Activated T-helper 2 cell treated with anti-CD3 and anti-CD28 coated beads, Interferon-gamma antibody, Interleukin-2, Interleukin-4, amounts not matched to agents 10 μg/mL and 5 μg/mL and 100 μg/mL, durations not matched to agents 14 hours and 24 hours and 36 hours (primary cell): ENCODE measurements at regions of chr14 and their contacts with region 1.

Region 1: GRCh38 chr14:74841230-74842207 is 34.4 kb downstream of the PROX2 start:
- DNase-seq: no peak
- H3K4me3 Mint-ChIP-seq: peak overlapping the region; percentile 45
- H3K27ac Mint-ChIP-seq: peak overlapping the region; percentile 73
- H3K4me1 Mint-ChIP-seq: peaks cover 43% of the 10 kb centered on the region
- H3K27me3 Mint-ChIP-seq: no peaks in the 10 kb centered on the region

Region 2: DNA sequence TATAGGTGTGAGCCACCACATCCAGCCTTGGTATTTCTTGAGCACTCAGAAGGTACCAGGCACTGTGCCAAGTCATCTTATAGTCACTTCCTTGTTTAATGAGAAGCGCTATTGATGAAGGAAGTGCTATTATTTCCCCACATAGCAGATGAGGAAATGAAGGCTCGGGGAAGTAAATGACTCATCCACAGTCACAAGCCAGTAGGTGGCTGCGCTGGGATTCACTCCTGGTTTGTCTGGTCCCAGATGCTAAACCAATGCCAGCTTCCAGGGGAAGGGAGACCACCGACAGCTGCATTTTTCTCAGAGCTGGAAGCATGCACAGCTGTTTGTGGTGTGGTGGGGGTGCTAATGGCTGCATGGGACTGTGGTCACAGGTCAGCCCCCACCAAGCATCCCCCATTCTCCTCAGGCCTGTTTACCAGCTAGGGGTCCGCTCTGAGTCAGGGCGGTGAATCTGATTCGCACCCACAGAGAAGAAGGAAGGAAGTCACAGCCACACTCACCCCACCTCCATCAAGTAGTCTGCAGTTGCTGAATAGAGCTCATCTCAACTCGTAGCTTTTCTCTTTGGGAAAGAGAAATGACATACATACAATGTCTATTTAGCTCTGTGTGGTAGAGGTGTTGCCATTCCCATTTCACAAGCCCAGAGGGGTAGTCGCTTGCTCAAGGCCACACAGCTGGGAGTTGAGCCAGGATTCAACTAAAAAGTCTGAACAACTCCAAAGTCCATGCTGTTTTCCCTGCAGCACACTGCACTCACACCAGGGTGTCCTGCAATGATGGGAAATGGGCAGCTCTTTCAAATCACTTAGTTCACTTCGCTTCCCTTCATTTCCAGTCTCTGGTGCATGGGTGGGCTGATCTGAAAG is 223.2 kb before region 1 on chr14:
- intact Hi-C with region 1: loop called (anchors 5 kb)
- DNase-seq: peak; percentile 40
- H3K4me3 Mint-ChIP-seq: no peak overlapping the region
- H3K27ac Mint-ChIP-seq: peak overlapping the region; percentile 24
- H3K4me1 Mint-ChIP-seq: peaks cover 65% of the 10 kb centered on the region
- H3K27me3 Mint-ChIP-seq: peaks cover 25% of the 10 kb centered on the region

Region 3: DNA sequence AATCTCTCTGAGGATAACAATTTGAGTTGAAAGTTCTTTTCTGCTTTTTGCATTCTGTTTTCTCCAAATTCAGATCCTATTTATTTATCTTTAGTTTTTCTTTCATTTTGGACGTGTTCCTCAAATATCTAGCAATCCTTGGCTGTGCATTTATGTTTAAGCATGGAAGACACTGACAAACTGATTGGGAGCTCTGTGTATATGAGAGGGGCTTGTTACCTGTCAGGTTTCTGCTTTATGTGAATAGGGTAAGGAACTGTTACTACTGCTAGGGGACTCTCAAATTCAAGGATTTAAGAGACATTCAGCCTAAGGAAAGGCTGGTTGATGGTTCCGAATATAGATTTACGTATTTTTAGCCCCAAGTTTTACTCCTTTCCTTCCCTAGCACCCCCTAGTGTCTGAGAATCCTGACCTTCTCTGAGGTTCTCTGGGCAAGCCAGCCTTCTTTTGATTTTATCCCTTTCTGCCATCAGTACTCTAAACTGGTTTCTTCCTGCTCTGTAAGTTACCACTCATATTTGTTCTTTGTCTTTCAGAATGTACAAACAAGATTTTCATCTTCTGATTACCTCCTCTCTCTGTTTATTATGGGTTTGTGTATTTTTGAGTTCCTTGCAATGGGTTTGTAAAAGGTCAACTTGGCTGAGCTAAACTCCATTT is 47.9 kb before region 1 on chr14:
- intact Hi-C with region 1: loop called (anchors 2 kb)
- DNase-seq: no peak
- H3K4me3 Mint-ChIP-seq: peak overlapping the region; percentile 63
- H3K27ac Mint-ChIP-seq: peak overlapping the region; percentile 79
- H3K4me1 Mint-ChIP-seq: peaks cover 39% of the 10 kb centered on the region
- H3K27me3 Mint-ChIP-seq: no peaks in the 10 kb centered on the region

Region 4: DNA sequence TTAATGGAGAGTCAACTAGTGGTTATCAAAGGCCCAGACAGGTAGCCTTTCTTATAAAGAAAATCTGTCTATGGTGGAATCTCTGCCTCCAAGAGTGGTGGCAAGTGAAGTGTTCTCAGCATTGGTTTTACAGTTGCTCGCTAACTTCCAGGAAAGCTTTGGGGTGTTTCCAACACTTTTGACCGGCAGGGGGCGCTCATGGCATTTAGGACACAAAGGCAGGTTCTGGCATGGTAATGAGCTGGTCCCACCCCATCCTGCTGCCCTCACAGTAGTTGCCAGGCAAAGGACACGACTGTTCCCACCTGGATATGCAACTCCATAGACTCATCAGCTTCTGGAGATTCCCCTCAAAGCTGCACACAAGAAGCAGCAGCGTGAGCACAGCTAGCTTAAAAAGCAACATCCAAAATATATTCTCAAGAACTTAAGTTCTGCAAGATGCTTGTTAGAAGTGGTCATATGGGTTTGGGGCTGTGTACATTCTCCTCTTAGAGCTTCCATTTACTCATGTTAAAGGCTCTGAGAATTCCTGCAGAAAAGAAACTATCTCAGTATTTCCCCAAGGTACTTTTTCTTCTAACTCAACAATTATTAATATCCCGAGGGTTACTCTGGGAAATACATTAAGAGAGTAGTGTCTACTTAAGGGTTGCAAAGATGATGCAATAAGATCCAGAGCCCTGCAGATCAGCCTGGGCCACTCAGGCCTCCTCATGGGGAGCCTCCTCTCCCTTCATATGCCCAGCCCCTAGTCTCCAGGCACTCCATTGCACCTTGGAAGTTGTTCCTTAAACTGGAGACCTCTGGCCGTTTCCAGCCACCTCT is 19.6 kb after region 1 on chr14:
- intact Hi-C with region 1: no loop called
- DNase-seq: peak; percentile 78
- H3K4me3 Mint-ChIP-seq: no peak overlapping the region
- H3K27ac Mint-ChIP-seq: no peak overlapping the region
- H3K4me1 Mint-ChIP-seq: no peaks in the 10 kb centered on the region
- H3K27me3 Mint-ChIP-seq: no peaks in the 10 kb centered on the region

Region 5: GRCh38 chr14:74881431-74882361 is 40.2 kb after region 1 on chr14 and contains the start of gene DLST:
- intact Hi-C with region 1: loop called (anchors 5 kb)
- DNase-seq: peak; percentile 84
- H3K4me3 Mint-ChIP-seq: peak within 1 kb of the TSS; percentile 100
- H3K27ac Mint-ChIP-seq: peak within 1 kb of the TSS; percentile 97
- H3K4me1 Mint-ChIP-seq: peaks cover 43% of the 10 kb centered on the region
- H3K27me3 Mint-ChIP-seq: no peaks in the 10 kb centered on the region
- total RNA-seq, gene DLST: 102 and 103 TPM in 2 replicates